ENCODE measurements at regions of chr17 and their contacts with region 1.

Region 1: GRCh38 chr17:76182016-76182764 is 41.1 kb upstream of the FOXJ1 start:
- DNase-seq: peak; percentile 98
- H3K4me3 Mint-ChIP-seq: peak overlapping the region; percentile 62
- H3K27ac Mint-ChIP-seq: peak overlapping the region; percentile 87
- H3K4me1 Mint-ChIP-seq: peaks cover 56% of the 10 kb centered on the region
- H3K27me3 Mint-ChIP-seq: no peaks in the 10 kb centered on the region

Region 2: DNA sequence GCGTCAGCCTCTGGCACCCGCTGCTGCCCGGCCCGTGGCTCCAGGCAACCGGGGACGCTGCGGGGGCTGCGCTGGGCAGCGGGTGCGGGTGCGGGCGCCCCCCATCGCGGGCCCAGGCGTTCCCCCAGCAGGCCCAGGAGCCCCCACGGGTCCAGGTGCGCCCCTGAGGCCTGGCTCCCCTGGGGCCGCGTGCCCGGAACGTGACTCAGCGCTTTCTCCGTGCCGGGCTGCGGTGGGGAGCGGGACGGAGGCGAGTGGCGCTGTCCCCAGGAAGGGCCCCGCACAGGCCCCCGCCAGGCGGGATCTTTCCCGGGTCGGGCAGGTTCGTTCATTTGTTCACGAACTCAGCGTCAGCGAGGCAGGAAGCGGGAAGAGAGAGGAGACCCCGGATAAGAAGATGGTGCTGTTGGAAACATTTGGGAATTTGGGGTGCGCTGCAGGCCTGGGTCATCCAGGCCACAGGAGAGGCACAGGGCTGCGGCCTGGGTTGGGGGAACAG is 60.2 kb before region 1 on chr17:
- CTCF ChIA-PET with region 1: interaction called, 93 read pairs
- POLR2A ChIA-PET with region 1: interaction called, 6 read pairs
- intact Hi-C with region 1: loop called (anchors 1 kb)
- DNase-seq: peak; percentile 35
- H3K4me3 Mint-ChIP-seq: no peak overlapping the region
- H3K27ac Mint-ChIP-seq: no peak overlapping the region
- H3K4me1 Mint-ChIP-seq: peaks cover 9% of the 10 kb centered on the region
- H3K27me3 Mint-ChIP-seq: no peaks in the 10 kb centered on the region

Region 3: GRCh38 chr17:76141212-76142038 is 40.8 kb before region 1 on chr17 and contains the start of gene FOXJ1:
- CTCF ChIA-PET with region 1: interaction called, 28 read pairs
- POLR2A ChIA-PET with region 1: interaction called, 4 read pairs
- intact Hi-C with region 1: loop called (anchors 2 kb)
- DNase-seq: peak; percentile 95
- H3K4me3 Mint-ChIP-seq: peak within 1 kb of the TSS; percentile 67
- H3K27ac Mint-ChIP-seq: no peak within 1 kb of the TSS
- H3K4me1 Mint-ChIP-seq: peaks cover 55% of the 10 kb centered on the region
- H3K27me3 Mint-ChIP-seq: peaks cover 8% of the 10 kb centered on the region
- total RNA-seq, gene FOXJ1: 0.22 to 0.29 TPM

Region 4: DNA sequence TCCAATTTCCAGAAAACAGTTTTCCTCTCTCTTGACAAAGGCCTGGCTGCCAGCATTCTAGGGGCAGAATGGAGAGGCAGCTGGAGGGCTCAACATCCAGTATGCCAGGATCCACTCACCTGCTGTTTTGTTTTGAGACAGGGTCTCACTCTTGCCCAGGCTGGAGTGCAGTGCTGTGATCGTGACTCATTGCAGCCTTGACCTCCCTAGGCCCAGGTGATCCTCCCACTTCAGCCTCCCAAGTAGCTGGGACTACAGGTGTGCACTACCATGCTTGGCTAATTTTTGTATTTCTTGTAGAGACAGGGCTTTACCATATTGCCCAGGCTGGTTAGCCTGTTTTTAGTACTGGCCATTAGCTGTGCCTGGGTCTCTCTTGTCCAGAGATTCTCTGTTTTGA is 12.1 kb before region 1 on chr17:
- CTCF ChIA-PET with region 1: interaction called, 10 read pairs
- POLR2A ChIA-PET with region 1: interaction called, 6 read pairs
- intact Hi-C with region 1: no loop called
- DNase-seq: no peak
- H3K4me3 Mint-ChIP-seq: no peak overlapping the region
- H3K27ac Mint-ChIP-seq: no peak overlapping the region
- H3K4me1 Mint-ChIP-seq: peaks cover 8% of the 10 kb centered on the region
- H3K27me3 Mint-ChIP-seq: no peaks in the 10 kb centered on the region

Region 5: DNA sequence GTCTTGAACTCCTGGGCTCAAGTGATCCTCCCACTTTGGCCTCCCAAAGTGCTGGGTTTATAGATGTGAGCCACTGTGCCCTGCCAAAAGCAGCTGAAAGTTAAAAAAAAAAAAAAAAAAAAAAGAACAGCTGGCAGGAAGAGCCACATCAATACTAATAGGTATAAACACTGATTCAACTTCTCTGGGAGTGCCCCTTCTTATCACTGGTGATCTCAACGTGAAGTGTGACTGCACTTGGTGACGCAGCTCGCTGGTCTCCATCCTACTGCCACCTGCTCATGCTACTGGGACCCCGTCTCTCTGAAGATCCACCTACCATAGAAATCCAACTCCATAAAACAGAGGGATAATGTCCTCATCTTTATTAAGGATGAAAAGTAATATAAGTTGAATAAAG is 17.3 kb after region 1 on chr17:
- CTCF ChIA-PET with region 1: interaction called, 12 read pairs
- POLR2A ChIA-PET with region 1: interaction called, 4 read pairs
- intact Hi-C with region 1: loop called (anchors 1 kb)
- DNase-seq: peak; percentile 83
- H3K4me3 Mint-ChIP-seq: peak overlapping the region; percentile 22
- H3K27ac Mint-ChIP-seq: peak overlapping the region; percentile 88
- H3K4me1 Mint-ChIP-seq: peaks cover 52% of the 10 kb centered on the region
- H3K27me3 Mint-ChIP-seq: no peaks in the 10 kb centered on the region

Region 6: DNA sequence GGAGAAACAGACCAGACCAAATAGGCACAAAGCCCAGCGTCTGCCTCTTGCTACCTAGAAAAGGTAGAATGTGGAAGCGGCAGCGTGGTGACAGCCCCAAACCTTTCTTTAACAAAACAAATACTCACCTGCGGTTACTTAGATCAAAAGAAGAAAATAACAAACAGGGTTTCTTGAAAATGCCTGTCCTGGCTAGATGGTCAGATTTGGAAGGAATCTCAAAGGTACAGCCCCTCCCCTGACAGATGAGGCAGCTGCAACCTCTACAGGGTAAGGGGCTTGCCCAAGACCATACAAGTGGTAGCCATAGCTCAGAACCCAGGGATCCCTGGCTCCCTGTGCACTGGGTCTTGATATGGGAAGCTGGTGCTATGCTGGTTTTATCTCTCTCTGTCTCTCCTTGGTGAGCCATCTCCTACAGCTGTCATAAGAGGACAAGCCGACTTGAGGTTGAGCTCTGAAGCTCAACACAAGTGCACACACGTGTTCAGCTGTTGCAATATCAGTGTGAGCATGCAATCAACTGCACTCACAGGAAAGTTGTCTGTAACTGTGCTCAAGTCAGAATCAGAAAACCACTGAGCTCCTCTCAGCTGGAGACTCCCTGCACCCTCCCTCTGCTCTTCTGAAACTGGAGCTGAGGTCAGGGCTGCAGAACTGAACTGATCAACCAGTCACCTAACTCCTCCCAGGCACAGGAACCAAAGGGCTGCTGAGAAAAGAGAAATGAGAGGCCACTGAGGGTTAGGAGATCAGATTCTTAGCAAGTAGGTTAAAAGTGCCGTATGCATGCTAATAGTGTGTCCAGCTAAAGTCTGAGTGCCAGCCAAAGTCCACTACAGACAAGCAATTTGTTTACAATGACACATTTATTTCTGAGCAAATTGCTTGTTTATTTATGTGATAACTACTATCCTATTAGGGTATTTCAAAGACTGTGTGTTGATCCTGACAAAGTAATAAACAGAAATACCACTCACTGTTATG is 64.2 kb after region 1 on chr17:
- CTCF ChIA-PET with region 1: interaction called, 11 read pairs
- POLR2A ChIA-PET with region 1: interaction called, 13 read pairs
- intact Hi-C with region 1: loop called (anchors 1 kb)
- DNase-seq: peak; percentile 88
- H3K4me3 Mint-ChIP-seq: peak overlapping the region; percentile 52
- H3K27ac Mint-ChIP-seq: peak overlapping the region; percentile 90
- H3K4me1 Mint-ChIP-seq: peaks cover 49% of the 10 kb centered on the region
- H3K27me3 Mint-ChIP-seq: no peaks in the 10 kb centered on the region